ENCODE measurements at regions of chr9 and their contacts with region 1.

Region 1: DNA sequence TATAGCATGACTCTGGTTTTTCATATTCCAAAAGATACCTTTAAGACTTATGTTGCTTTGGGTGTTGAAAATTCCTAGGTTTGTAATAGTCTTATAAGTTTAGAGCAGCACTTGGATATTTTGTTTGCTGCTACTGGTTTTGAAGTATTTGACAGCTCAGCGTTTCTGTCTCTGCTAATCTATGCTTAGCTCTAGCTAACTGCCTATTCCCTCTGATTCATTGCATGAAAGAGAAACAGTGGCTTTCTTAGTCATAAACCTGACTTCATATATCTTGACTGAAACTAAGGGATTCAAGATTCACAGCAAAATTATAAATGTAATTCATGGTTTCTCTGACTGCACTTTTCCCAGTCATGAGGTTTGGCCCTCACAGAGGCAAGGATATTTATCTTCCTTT is 35.6 kb upstream of the ANXA1 start:
- DNase-seq: no peak
- H3K4me3 Mint-ChIP-seq: no peak overlapping the region
- H3K27ac Mint-ChIP-seq: no peak overlapping the region
- H3K4me1 Mint-ChIP-seq: peaks cover 18% of the 10 kb centered on the region
- H3K27me3 Mint-ChIP-seq: no peaks in the 10 kb centered on the region
- CTCF ChIP-seq: no peak

Region 2: GRCh38 chr9:72577212-72577753 is 538.7 kb before region 1 on chr9:
- CTCF ChIA-PET with region 1: no interaction called
- POLR2A ChIA-PET with region 1: no interaction called
- intact Hi-C with region 1: no loop called
- DNase-seq: peak; percentile 95
- H3K4me3 Mint-ChIP-seq: peak overlapping the region; percentile 15
- H3K27ac Mint-ChIP-seq: peak overlapping the region; percentile 53
- H3K4me1 Mint-ChIP-seq: peaks cover 36% of the 10 kb centered on the region
- H3K27me3 Mint-ChIP-seq: no peaks in the 10 kb centered on the region
- CTCF ChIP-seq: no peak

Region 3: DNA sequence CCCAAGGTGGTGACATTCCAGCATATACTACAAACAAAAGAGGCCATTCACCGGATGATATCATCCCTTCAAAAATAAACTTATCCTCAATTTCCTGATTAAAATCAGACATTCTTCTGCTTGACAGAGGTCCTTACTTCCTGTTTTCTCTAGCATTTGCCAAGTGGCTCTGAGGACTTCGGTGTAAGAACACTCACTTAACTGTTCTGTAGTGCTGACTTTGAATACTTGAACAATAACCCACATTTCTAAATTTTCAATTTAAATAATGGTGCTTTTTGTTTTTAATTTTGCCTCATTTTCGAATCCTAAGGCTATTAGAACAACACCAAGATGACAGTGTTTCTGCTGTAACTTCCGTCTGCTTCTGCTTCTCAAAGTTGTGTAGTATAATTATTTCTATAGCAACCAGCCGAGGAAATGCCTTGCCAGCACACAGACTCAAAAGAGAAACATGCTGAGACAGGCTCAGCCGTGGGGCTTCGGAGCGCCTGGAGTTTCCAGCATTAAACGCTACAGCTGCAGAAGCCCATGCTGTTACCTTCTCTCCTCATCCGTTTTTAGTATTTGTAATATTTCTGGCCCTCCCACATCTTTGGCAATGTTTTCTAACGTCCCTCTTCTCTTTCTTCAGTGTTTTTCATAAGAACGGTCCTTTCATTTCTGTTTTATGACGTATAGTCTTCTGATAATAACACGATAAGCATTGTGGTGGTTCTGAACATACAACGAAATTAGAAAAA is 16.2 kb after region 1 on chr9:
- CTCF ChIA-PET with region 1: interaction called, 16 read pairs
- POLR2A ChIA-PET with region 1: interaction called, 129 read pairs
- intact Hi-C with region 1: loop called (anchors 2 kb)
- DNase-seq: peak; percentile 90
- H3K4me3 Mint-ChIP-seq: peak overlapping the region; percentile 76
- H3K27ac Mint-ChIP-seq: peak overlapping the region; percentile 97
- H3K4me1 Mint-ChIP-seq: peaks cover 31% of the 10 kb centered on the region
- H3K27me3 Mint-ChIP-seq: no peaks in the 10 kb centered on the region
- CTCF ChIP-seq: no peak

Region 4: GRCh38 chr9:73143606-73144328 is 27.7 kb after region 1 on chr9:
- CTCF ChIA-PET with region 1: interaction called, 3 read pairs
- POLR2A ChIA-PET with region 1: interaction called, 16 read pairs
- intact Hi-C with region 1: no loop called
- DNase-seq: peak; percentile 93
- H3K4me3 Mint-ChIP-seq: no peak overlapping the region
- H3K27ac Mint-ChIP-seq: peak overlapping the region; percentile 32
- H3K4me1 Mint-ChIP-seq: peaks cover 43% of the 10 kb centered on the region
- H3K27me3 Mint-ChIP-seq: no peaks in the 10 kb centered on the region
- CTCF ChIP-seq: no peak

Region 5: DNA sequence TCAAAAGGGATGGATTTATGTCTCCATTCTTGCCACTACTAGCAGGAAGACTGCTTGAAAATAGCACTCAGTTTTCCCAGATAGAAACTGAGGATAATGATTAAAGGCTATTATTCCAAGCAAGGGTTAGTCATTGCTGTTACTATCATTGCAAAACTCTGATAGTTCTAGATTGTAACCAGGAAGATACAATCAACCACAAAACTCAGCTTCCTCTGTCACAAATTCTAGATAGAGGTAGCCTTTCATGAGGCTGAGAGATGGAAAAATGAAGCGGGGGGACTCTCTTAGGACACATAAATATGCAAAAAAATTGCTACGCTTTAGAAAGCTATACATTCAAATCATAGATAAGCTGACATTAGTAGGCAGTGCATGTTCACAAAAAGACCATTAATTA is 38.7 kb after region 1 on chr9:
- CTCF ChIA-PET with region 1: interaction called, 6 read pairs
- POLR2A ChIA-PET with region 1: interaction called, 73 read pairs
- intact Hi-C with region 1: loop called (anchors 1 kb)
- DNase-seq: peak; percentile 22
- H3K4me3 Mint-ChIP-seq: peak overlapping the region; percentile 88
- H3K27ac Mint-ChIP-seq: peak overlapping the region; percentile 97
- H3K4me1 Mint-ChIP-seq: peaks cover 30% of the 10 kb centered on the region
- H3K27me3 Mint-ChIP-seq: no peaks in the 10 kb centered on the region
- CTCF ChIP-seq: no peak

Region 6: DNA sequence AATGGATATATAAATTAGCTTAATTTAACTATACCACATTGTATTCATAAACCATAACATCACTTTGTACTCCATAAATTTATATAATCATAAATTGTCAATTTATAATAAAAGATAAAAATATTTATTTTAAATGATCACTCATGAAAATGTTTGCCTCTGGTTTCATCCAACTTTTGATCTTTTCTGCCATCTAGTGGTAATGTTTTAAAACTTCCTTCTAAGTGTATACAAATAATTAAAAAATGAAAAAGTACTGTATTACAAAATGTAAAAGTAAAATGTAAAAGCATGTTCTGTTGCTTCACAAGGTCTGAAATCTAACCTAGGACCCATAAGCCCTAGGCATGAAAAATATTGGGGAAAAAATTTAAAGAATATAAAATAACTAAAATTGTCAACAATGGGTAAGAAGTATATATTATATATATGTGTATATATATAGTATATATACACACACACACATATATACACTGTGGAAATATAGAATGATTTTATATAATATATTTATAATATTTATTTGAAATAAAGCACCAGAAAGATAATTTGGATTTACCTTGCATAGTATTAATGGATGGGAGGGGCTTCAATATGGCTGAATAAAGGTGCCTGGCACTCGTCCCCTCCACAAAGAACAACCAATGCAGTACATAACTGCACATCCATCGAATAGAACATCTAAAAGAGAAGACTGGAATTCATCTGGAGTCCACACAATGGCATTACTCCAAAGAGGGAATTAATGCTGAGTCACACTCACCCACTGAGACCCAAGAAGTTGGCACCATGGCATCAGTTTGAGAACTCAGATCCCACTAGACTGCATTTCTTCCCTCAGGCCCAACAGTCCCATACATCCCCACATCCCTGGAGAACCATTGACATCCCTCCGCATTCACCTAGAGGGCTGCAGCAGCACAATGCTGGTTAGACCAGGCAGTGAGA is 68.2 kb after region 1 on chr9:
- CTCF ChIA-PET with region 1: interaction called, 78 read pairs
- POLR2A ChIA-PET with region 1: no interaction called
- intact Hi-C with region 1: no loop called
- DNase-seq: peak; percentile 59
- H3K4me3 Mint-ChIP-seq: no peak overlapping the region
- H3K27ac Mint-ChIP-seq: no peak overlapping the region
- H3K4me1 Mint-ChIP-seq: no peaks in the 10 kb centered on the region
- H3K27me3 Mint-ChIP-seq: peaks cover 42% of the 10 kb centered on the region
- CTCF ChIP-seq: peak; percentile 48

Measured in MCF 10A (cell line).